Activated CD4-positive, alpha-beta T cell treated with anti-CD3 and anti-CD28 coated beads for 36 hours (primary cell): ENCODE measurements at regions of chr5 and their contacts with region 1.

Region 1: GRCh38 chr5:10987930-10988504 is 227.0 kb upstream of the DAP start:
- DNase-seq: peak; percentile 87
- ATAC-seq: peak; percentile 97
- H3K4me3 Mint-ChIP-seq: peak overlapping the region; percentile 46
- H3K27ac Mint-ChIP-seq: no peak overlapping the region
- H3K4me1 Mint-ChIP-seq: peaks cover 9% of the 10 kb centered on the region
- H3K27me3 Mint-ChIP-seq: peaks cover 18% of the 10 kb centered on the region

Region 2: DNA sequence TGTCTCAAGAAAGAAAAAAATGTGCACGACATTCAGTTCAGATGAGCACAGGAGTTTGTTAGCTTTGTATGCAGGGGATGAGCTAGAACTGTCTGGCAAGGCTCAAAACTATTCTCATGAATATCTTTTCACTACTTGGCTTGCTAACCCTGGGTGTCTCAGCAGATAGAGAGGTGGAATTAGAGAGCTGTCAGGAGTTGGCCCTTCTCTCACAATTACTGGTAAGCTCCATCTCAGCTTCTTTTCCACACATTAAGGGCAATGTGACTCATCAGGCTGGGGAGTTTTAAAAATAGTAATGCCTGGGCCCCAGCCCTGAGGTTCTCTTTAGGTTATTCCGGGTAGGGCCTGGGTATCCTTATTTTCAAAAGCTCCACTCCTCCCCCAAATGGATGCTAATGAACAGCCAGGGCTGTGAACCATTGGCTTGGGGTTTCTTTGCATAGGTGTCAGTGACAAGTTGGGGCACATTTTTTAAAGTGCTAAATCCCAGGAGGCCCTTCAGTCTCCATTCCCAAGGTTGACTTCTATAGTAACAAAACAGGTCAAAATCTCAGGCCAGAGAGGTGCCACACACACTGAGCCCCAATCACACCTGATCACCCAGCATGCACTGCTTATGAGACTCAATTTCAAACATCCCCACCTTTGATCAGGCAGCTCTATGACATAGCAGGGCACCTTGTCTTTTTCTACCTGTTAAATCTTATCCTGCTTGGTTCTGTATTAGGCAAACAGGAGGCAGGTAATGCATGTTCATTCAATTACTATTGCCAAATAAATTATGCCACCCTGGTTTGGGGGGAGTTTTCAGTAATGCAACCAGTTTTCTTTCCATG is 12.7 kb after region 1 on chr5:
- CTCF ChIA-PET with region 1: interaction called, 10 read pairs
- POLR2A ChIA-PET with region 1: no interaction called
- intact Hi-C with region 1: no loop called
- DNase-seq: no peak
- ATAC-seq: no peak
- H3K4me3 Mint-ChIP-seq: no peak overlapping the region
- H3K27ac Mint-ChIP-seq: no peak overlapping the region
- H3K4me1 Mint-ChIP-seq: no peaks in the 10 kb centered on the region
- H3K27me3 Mint-ChIP-seq: peaks cover 5% of the 10 kb centered on the region

Region 3: GRCh38 chr5:11182441-11183268 is 194.6 kb after region 1 on chr5:
- CTCF ChIA-PET with region 1: interaction called, 8 read pairs
- POLR2A ChIA-PET with region 1: no interaction called
- intact Hi-C with region 1: loop called (anchors 1 to 2 kb)
- DNase-seq: no peak
- ATAC-seq: no peak
- H3K4me3 Mint-ChIP-seq: no peak overlapping the region
- H3K27ac Mint-ChIP-seq: no peak overlapping the region
- H3K4me1 Mint-ChIP-seq: peaks cover 12% of the 10 kb centered on the region
- H3K27me3 Mint-ChIP-seq: peaks cover 5% of the 10 kb centered on the region

Region 4: GRCh38 chr5:11361768-11362167 is 373.8 kb after region 1 on chr5:
- CTCF ChIA-PET with region 1: no interaction called
- POLR2A ChIA-PET with region 1: no interaction called
- intact Hi-C with region 1: loop called in 1 of 2 experiments (anchors 5 kb)
- DNase-seq: no peak
- ATAC-seq: no peak
- H3K4me3 Mint-ChIP-seq: no peak overlapping the region
- H3K27ac Mint-ChIP-seq: no peak overlapping the region
- H3K4me1 Mint-ChIP-seq: no peaks in the 10 kb centered on the region
- H3K27me3 Mint-ChIP-seq: peaks cover 2% of the 10 kb centered on the region

Region 5: GRCh38 chr5:11494340-11494739 is 506.3 kb after region 1 on chr5:
- CTCF ChIA-PET with region 1: no interaction called
- POLR2A ChIA-PET with region 1: no interaction called
- intact Hi-C with region 1: loop called in 1 of 2 experiments (anchors 5 kb)
- DNase-seq: peak; percentile 5
- ATAC-seq: no peak
- H3K4me3 Mint-ChIP-seq: no peak overlapping the region
- H3K27ac Mint-ChIP-seq: no peak overlapping the region
- H3K4me1 Mint-ChIP-seq: no peaks in the 10 kb centered on the region
- H3K27me3 Mint-ChIP-seq: peaks cover 2% of the 10 kb centered on the region

Region 6: DNA sequence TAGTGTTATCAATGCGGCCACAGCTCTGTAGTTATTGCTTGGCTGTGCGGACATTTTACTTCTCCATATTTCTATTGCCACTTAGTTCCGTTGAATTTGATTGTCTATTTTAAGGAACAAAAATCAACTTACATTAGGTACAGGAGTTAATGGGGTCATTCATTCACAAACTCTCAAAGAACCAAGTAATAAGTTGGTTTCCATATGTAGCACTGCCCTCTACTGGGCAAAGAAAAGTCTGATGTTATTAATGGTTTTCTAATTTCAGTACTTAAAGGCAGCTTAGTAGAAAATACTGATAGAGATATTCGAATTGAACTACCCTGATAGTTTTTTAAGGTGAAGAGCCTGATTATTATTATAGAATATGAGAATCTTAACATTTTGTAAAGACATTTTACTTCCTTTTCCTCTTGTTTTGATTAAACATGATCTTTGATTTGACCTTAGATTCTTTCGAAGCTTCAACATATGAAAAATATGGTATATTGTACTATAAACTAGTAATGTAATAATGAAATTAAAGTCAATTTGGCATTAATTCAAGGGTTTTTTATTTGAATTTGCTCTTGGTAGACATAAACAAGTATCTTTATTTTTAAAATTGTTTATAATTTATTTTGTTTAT is 1035.7 kb after region 1 on chr5:
- CTCF ChIA-PET with region 1: interaction called, 5 read pairs
- POLR2A ChIA-PET with region 1: no interaction called
- intact Hi-C with region 1: loop called in 1 of 2 experiments (anchors 2 kb)
- DNase-seq: no peak
- ATAC-seq: no peak
- H3K4me3 Mint-ChIP-seq: no peak overlapping the region
- H3K27ac Mint-ChIP-seq: no peak overlapping the region
- H3K4me1 Mint-ChIP-seq: no peaks in the 10 kb centered on the region
- H3K27me3 Mint-ChIP-seq: no peaks in the 10 kb centered on the region